Posterior vena cava (tissue), 2 donors: ENCODE measurements at regions of chr17 and their contacts with region 1.

Region 1: GRCh38 chr17:31433091-31433790 is 41.8 kb downstream of the RAB11FIP4 start:
- DNase-seq: no peak

Region 2: DNA sequence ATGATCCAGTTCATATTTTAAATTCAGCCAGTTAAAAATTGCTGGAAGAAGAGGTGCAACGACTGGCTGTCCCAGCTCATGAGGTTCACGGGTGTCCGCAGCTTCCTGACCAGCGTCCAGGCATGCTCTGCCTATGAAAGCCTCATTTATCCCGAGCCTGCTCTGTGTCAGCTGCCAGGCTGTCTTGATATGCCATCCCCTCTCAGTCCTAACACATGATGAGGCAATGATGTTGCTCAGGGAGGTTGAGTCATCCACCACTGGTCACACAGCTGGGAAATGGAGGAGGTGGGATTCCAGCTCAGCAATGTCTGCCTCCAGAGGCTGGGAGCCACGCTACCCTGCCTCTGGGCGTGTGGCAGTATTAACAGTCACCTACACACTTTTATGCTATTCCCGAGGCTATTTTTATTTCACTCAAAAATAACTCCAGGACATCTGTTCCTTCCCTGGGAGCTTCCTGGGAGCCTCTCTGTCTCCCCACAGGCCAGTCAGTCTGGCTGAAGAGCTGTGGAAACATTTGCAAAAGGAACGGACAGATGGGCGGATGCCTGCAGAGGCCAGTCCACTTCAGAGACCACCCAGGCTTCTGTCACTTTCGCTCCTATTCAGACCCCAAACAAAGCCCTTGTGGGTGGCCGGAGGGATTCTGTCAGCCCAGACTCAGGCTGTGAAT is 19.2 kb before region 1 on chr17:
- intact Hi-C with region 1: no loop called
- DNase-seq: peak; percentile 45

Region 3: DNA sequence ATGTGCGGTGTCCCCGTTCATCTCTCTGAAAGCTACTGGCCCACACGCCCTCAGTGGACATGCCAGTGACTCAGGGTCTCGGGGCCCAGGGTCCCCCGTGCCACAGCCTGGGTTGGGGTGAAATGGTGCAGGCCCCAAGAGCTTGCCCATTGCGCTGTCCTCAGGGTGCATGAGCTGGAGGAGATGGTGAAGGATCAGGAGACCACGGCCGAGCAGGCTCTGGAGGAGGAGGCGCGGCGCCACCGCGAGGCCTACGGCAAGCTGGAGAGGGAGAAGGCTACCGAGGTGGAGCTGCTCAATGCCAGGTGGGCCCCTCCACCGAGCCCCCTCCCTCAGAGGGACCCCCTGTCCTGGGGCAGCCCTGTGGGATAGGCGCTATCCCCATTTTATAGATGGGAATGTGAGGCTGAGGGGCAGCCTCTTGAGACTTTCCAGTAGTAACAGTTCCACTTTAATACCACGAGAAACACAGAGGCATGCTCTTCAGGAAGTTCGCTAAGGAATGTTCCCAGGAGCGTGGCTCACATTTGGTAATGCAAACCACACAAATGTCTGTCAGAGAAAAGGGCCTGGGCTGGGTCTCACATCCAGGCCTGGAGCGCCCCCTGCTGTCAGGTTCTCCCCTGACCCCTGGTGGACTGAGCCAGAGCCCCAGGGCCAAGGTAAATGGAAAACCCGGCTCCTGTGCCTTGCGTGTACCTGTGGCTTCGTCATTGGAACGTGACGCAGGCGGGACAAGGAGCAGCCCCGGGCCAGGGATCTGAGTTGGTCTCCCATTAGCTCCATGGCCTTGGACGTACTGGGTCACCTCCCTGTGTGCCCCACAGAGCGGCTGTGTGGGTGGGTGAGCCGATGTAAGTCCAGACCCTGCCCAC is 91.9 kb after region 1 on chr17:
- intact Hi-C with region 1: loop called (anchors 5 kb)
- DNase-seq: peak; percentile 95

Region 4: GRCh38 chr17:31663576-31663975 is 230.3 kb after region 1 on chr17:
- intact Hi-C with region 1: no loop called
- DNase-seq: no peak